CD4-positive, alpha-beta T cell (primary cell): ENCODE measurements at regions of chr1 and their contacts with region 1.

Region 1: GRCh38 chr1:184222652-184223052 is 164.2 kb upstream of the C1orf21 start:
- DNase-seq: peak in 12 of 14 experiments; percentile 8 to 58 (median 24)
- ATAC-seq: no peak
- H3K4me3 ChIP-seq: no peak overlapping the region
- H3K4me3 Mint-ChIP-seq: no peak overlapping the region
- H3K27ac ChIP-seq: no peak overlapping the region
- H3K27ac Mint-ChIP-seq: no peak overlapping the region
- H3K4me1 ChIP-seq: no peaks in the 10 kb centered on the region
- H3K4me1 Mint-ChIP-seq: no peaks in the 10 kb centered on the region
- H3K27me3 ChIP-seq: peaks cover 0 to 3% of the 10 kb centered on the region in 2 experiments
- H3K27me3 Mint-ChIP-seq: peaks cover 5% of the 10 kb centered on the region
- CTCF ChIP-seq: peak; percentile 82

Region 2: GRCh38 chr1:183655562-183656075 is 567.0 kb before region 1 on chr1:
- CTCF ChIA-PET with region 1: no interaction called
- POLR2A ChIA-PET with region 1: no interaction called
- intact Hi-C with region 1: loop called in 1 of 2 experiments (anchors 5 kb)
- DNase-seq: peak; percentile 50 to 87 (median 70)
- ATAC-seq: peak; percentile 70
- H3K4me3 ChIP-seq: no peak overlapping the region
- H3K4me3 Mint-ChIP-seq: no peak overlapping the region
- H3K27ac ChIP-seq: no peak overlapping the region
- H3K27ac Mint-ChIP-seq: no peak overlapping the region
- H3K4me1 ChIP-seq: peaks cover 28% of the 10 kb centered on the region
- H3K4me1 Mint-ChIP-seq: peaks cover 40% of the 10 kb centered on the region
- H3K27me3 ChIP-seq: no peaks in the 10 kb centered on the region
- H3K27me3 Mint-ChIP-seq: no peaks in the 10 kb centered on the region
- CTCF ChIP-seq: peak; percentile 85

Region 3: DNA sequence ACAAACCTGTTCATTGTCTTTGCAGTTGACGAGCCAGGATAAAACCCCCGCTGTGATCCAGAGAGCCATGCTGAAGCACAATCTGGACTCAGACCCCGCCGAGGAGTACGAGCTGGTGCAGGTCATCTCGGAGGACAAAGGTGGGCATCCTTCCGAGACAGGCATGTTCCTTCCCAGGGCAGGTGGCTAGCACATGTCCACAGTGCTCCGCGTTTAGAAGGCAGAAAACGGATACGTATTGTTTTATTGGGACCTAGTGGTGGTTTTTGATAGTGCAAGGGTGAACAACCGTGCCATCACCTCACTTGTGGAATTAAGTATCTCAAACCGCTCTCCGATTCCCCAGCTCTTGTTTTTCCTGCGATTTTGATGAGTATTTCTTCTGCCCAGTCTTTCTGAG is 300.5 kb before region 1 on chr1:
- CTCF ChIA-PET with region 1: no interaction called
- POLR2A ChIA-PET with region 1: no interaction called
- intact Hi-C with region 1: loop called in 1 of 2 experiments (anchors 10 kb)
- DNase-seq: no peak
- ATAC-seq: no peak
- H3K4me3 ChIP-seq: no peak overlapping the region
- H3K4me3 Mint-ChIP-seq: no peak overlapping the region
- H3K27ac ChIP-seq: no peak overlapping the region
- H3K27ac Mint-ChIP-seq: no peak overlapping the region
- H3K4me1 ChIP-seq: no peaks in the 10 kb centered on the region
- H3K4me1 Mint-ChIP-seq: no peaks in the 10 kb centered on the region
- H3K27me3 ChIP-seq: no peaks in the 10 kb centered on the region
- H3K27me3 Mint-ChIP-seq: no peaks in the 10 kb centered on the region
- CTCF ChIP-seq: no peak

Region 4: DNA sequence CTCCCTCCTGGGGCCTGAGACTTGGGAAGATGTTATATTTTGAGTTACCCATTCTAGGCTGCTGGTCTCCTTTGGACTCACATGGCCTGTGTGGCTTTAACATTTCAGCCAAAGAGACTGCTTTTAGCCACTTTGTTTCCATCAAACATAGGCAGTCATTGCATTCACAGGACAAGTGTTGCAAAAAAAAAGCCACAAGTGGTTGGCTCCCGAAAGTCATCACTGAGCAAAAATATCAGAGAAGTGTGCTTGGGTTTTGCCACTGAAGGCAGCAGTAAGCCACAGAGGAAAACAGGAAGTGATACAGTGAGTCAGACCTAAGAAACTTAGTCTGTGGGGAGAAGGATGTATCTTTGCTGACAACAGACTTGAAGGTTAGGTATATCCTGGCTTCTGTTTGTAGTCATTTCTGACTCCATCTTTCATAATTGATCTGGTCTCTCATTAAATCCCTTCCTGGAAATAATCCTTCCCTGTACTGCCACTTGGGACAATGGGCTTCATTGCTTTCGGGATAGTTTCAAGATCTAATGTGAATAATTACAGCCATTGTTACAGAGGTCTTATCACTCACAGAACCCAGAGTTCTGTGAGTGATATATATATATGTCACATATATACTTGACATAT is 266.0 kb before region 1 on chr1:
- CTCF ChIA-PET with region 1: no interaction called
- POLR2A ChIA-PET with region 1: no interaction called
- intact Hi-C with region 1: loop called (anchors 1 to 2 kb)
- DNase-seq: peak in 13 of 14 experiments; percentile 9 to 91 (median 36)
- ATAC-seq: peak; percentile 100
- H3K4me3 ChIP-seq: no peak overlapping the region
- H3K4me3 Mint-ChIP-seq: peak overlapping the region; percentile 7
- H3K27ac ChIP-seq: peak overlapping the region; percentile 60 to 74
- H3K27ac Mint-ChIP-seq: no peak overlapping the region
- H3K4me1 ChIP-seq: peaks cover 20% of the 10 kb centered on the region
- H3K4me1 Mint-ChIP-seq: peaks cover 6% of the 10 kb centered on the region
- H3K27me3 ChIP-seq: no peaks in the 10 kb centered on the region
- H3K27me3 Mint-ChIP-seq: no peaks in the 10 kb centered on the region
- CTCF ChIP-seq: peak; percentile 39

Region 5: GRCh38 chr1:184075055-184076029 is 147.3 kb before region 1 on chr1:
- CTCF ChIA-PET with region 1: no interaction called
- POLR2A ChIA-PET with region 1: no interaction called
- intact Hi-C with region 1: loop called (anchors 1 to 5 kb)
- DNase-seq: peak in 4 of 14 experiments; percentile 19 to 53 (median 50)
- ATAC-seq: peak; percentile 34
- H3K4me3 ChIP-seq: no peak overlapping the region
- H3K4me3 Mint-ChIP-seq: no peak overlapping the region
- H3K27ac ChIP-seq: no peak overlapping the region
- H3K27ac Mint-ChIP-seq: peak overlapping the region; percentile 25
- H3K4me1 ChIP-seq: no peaks in the 10 kb centered on the region
- H3K4me1 Mint-ChIP-seq: no peaks in the 10 kb centered on the region
- H3K27me3 ChIP-seq: no peaks in the 10 kb centered on the region
- H3K27me3 Mint-ChIP-seq: no peaks in the 10 kb centered on the region
- CTCF ChIP-seq: peak; percentile 56

Region 6: DNA sequence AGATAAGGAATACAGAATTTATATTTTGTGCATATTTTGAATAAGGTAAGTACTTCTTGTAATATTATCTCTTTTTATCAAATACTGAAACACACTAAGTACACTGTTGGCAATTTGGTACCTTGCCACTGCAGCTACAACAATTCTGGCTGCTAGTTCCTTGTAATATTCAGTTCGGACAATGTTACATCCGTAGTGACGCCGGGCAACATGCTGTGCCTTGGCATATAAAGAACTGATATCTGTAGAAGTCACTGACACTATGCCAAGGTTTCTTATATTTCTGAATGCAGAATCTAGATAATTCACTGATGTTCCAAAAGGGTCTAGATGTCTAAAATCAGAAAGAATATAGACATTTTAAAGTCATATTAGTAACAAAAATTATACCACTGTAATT is 916.6 kb after region 1 on chr1:
- CTCF ChIA-PET with region 1: no interaction called
- POLR2A ChIA-PET with region 1: no interaction called
- intact Hi-C with region 1: no loop called
- DNase-seq: no peak
- ATAC-seq: no peak
- H3K4me3 ChIP-seq: no peak overlapping the region
- H3K4me3 Mint-ChIP-seq: no peak overlapping the region
- H3K27ac ChIP-seq: no peak overlapping the region
- H3K27ac Mint-ChIP-seq: no peak overlapping the region
- H3K4me1 ChIP-seq: no peaks in the 10 kb centered on the region
- H3K4me1 Mint-ChIP-seq: no peaks in the 10 kb centered on the region
- H3K27me3 ChIP-seq: no peaks in the 10 kb centered on the region
- H3K27me3 Mint-ChIP-seq: no peaks in the 10 kb centered on the region
- CTCF ChIP-seq: no peak